ENCODE measurements at regions of chr9 and their contacts with region 1.

Region 1: GRCh38 chr9:101254733-101255473 is 129.9 kb downstream of the BAAT start:
- DNase-seq: no peak
- H3K4me3 ChIP-seq: no peak overlapping the region
- H3K27ac ChIP-seq: no peak overlapping the region
- H3K4me1 ChIP-seq: no peaks in the 10 kb centered on the region
- H3K27me3 ChIP-seq: no peaks in the 10 kb centered on the region
- CTCF ChIP-seq: no peak
- POLR2A ChIP-seq: no peak

Region 2: DNA sequence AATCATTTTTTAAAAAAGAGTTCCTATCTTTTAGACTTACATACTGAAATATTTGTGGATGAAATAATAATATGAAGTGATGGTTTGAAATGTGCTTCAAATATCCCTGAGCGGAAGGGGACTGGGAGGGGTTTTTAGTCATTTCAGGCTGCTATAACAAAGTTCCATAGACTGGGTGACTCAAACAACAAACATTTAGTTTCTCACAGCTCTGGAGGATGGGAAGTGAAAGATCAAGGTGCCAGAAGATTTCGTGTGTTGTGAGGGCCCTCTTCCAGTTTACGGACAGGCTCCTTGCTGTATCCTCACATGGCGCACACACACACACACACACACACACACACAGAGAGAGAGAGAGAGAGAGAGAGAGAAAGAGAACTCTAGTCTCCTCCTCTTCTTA is 875.0 kb before region 1 on chr9:
- intact Hi-C with region 1: no loop called
- DNase-seq: no peak
- H3K4me3 ChIP-seq: no peak overlapping the region
- H3K27ac ChIP-seq: no peak overlapping the region
- H3K4me1 ChIP-seq: no peaks in the 10 kb centered on the region
- H3K27me3 ChIP-seq: no peaks in the 10 kb centered on the region
- CTCF ChIP-seq: no peak
- POLR2A ChIP-seq: no peak

Region 3: GRCh38 chr9:101201630-101202029 is 53.3 kb before region 1 on chr9:
- intact Hi-C with region 1: no loop called
- DNase-seq: no peak
- H3K4me3 ChIP-seq: no peak overlapping the region
- H3K27ac ChIP-seq: no peak overlapping the region
- H3K4me1 ChIP-seq: no peaks in the 10 kb centered on the region
- H3K27me3 ChIP-seq: no peaks in the 10 kb centered on the region
- CTCF ChIP-seq: no peak
- POLR2A ChIP-seq: no peak

Region 4: DNA sequence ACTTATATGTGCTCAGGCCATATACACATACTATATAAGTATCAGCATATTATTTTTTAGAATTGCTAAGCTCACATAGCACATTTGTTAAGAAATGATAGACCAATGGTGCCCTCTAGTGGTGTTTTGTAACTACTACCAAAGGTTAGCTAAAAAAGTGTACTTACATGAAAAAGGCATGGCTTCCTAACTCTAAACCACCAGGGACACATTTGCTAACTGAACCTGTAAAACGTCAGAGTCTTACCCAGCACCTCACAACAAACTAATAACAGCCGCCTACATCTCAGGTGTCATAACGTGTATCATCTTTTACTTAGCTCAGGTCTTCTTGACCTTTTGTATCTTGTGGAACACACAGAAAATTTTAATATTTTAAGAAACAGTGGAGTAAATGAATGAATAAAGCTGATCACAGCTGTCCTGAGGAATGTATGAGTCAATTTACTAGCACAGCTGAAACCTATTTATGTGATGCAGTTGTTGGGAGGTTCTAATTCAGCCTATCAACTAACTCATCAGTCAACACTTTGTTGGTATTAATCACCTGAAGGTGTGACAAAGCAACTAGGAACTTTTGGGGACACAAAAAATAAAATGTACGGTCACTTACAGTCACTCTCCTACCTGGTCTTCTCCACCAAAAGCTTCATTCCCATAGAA is 57.0 kb after region 1 on chr9:
- intact Hi-C with region 1: no loop called
- DNase-seq: no peak
- H3K4me3 ChIP-seq: no peak overlapping the region
- H3K27ac ChIP-seq: no peak overlapping the region
- H3K4me1 ChIP-seq: no peaks in the 10 kb centered on the region
- H3K27me3 ChIP-seq: no peaks in the 10 kb centered on the region
- CTCF ChIP-seq: peak in 2 of 3 donors; percentile 60 to 63
- POLR2A ChIP-seq: no peak

Region 5: DNA sequence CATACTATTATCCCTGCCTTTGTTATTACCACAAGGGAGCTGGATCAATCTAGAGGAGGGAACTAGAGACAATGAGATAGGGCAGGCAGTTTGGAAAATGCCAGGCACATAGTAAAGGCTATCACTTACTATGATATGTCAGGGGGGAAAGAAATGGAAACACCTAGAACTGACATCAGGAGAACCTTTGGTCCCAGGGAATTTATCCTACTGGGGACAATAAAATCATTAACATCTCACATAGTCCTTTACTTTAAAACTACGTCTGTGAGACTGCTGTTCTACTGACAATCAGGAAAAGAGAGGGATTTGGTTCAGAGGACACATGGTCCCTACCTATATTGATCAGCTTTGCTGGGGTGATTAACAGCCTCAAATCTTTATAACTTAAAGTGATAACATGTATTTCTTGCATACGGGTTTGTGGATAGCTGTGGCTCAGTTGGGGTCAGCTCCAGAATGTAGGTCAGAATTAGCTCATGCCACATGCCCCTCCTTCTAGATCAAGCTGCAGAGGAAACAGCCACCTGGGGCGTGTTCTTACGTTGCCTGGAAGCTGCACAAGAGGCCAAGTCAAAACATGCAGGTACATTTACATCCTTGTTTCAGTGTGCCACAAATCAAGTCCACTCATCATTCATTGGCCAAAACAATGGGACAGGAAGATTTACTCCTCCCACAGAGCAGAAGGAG is 224.6 kb after region 1 on chr9:
- intact Hi-C with region 1: loop called (anchors 5 kb)
- DNase-seq: peak in 1 of 2 donors; percentile 28
- H3K4me3 ChIP-seq: no peak overlapping the region
- H3K27ac ChIP-seq: peak overlapping the region in 1 of 2 donors; percentile 4
- H3K4me1 ChIP-seq: no peaks in the 10 kb centered on the region
- H3K27me3 ChIP-seq: no peaks in the 10 kb centered on the region
- CTCF ChIP-seq: no peak
- POLR2A ChIP-seq: no peak